Breast epithelium (tissue), 4 donors: ENCODE measurements at regions of chr1 and their contacts with region 1.

Region 1: GRCh38 chr1:7013833-7014639 is 228.8 kb downstream of the CAMTA1 start:
- DNase-seq: no peak
- H3K4me3 ChIP-seq: no peak overlapping the region
- H3K27ac ChIP-seq: no peak overlapping the region
- H3K4me1 ChIP-seq: no peaks in the 10 kb centered on the region
- H3K27me3 ChIP-seq: no peaks in the 10 kb centered on the region
- CTCF ChIP-seq: no peak
- POLR2A ChIP-seq: no peak

Region 2: DNA sequence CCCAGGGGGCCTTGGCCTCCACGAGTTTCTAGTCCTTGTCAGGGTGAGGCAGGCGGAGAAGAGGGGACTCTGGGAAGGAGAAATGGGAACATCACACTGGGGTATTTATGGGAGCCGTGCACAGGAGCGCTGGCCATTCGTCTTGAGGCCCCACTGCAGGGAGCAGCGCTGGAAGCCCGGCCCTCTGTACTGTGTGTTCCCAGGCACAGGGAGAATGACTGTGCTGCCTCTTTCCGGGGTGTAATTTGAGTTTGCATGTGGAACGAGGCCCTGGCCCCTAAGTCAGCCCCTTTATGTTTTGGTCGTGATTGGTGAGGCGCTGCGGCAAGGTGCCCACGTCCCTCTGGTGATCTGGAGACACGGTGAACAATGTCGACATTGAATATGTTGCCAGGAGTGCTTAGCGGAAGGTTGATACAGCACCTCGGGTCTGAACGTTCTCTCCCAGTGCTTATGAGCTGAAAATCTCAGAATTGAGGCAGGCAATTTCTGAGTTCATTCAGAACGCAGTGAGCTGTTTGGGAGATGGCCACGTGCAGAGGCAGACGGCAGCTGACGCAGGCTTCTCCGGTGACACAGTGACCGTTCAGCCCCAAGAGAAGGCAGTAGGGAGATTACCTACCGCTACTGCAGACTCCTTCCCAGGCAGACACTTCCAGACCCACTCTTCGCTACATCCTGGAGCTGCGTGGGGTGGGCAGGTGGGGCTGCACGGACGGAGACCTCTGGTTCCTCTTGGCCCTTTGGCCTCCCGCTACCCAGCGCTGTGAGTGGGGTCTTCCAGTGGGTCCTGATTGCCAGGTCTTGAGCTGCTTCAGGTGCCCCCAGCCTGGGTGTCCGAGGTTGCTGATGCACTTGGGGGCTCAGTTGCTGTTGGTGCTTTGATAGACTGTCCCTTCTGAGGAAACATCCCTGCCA is 37.0 kb after region 1 on chr1:
- intact Hi-C with region 1: loop called (anchors 2 kb)
- DNase-seq: no peak
- H3K4me3 ChIP-seq: no peak overlapping the region
- H3K27ac ChIP-seq: no peak overlapping the region
- H3K4me1 ChIP-seq: no peaks in the 10 kb centered on the region
- H3K27me3 ChIP-seq: no peaks in the 10 kb centered on the region
- CTCF ChIP-seq: no peak
- POLR2A ChIP-seq: no peak